Calu3 (cell line): ENCODE measurements at regions of chr2 and their contacts with region 1.

Region 1: GRCh38 chr2:31428001-31428418 is 13.5 kb upstream of the XDH start:
- DNase-seq: peak; percentile 72
- H3K4me3 Mint-ChIP-seq: no peak overlapping the region
- H3K27ac Mint-ChIP-seq: peak overlapping the region; percentile 71
- H3K4me1 Mint-ChIP-seq: peaks cover 47% of the 10 kb centered on the region
- H3K27me3 Mint-ChIP-seq: no peaks in the 10 kb centered on the region
- CTCF ChIP-seq: peak; percentile 32

Region 2: DNA sequence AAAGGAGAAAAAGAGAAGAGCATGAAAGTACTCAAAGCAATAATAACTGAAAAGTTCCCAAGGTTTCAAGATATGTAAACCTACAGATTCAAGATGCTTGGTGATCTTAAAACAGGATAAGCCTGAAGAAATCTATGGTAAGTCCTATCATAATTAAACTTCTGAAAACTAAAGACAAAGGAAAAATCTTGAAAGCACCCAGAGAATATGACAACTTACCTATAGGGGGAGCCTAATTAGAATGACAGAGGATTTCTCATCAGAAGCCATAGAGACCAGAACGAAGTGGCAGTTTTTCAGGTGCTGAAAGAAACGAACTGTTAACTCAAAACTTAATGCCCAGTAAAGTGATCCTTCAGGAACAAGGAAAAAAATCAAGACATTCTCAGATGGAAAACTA is 73.2 kb before region 1 on chr2:
- CTCF ChIA-PET with region 1: no interaction called
- intact Hi-C with region 1: loop called (anchors 2 kb)
- DNase-seq: no peak
- H3K4me3 Mint-ChIP-seq: peak overlapping the region; percentile 8
- H3K27ac Mint-ChIP-seq: peak overlapping the region; percentile 20
- H3K4me1 Mint-ChIP-seq: peaks cover 12% of the 10 kb centered on the region
- H3K27me3 Mint-ChIP-seq: no peaks in the 10 kb centered on the region
- CTCF ChIP-seq: peak; percentile 33

Region 3: DNA sequence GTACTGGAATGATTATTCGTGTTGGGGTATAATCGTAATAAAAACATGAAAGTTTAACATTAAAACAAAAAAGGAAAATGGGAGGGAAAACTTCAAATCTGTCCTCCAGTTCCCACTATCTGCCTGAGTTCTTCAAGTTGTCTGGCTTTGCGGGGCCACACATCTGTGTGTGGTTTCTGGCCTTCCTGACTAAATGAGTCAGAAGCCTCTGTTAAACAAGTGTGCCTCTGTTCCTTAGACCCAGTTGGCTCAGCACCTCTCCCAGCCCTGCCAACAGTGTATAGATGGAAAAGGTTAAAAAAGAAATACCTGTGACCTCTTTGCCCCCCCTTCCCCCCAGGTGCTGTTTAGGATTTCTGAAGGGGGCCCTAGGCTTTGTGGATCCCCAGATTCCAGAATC is 43.7 kb before region 1 on chr2:
- CTCF ChIA-PET with region 1: interaction called, 3 read pairs
- intact Hi-C with region 1: loop called (anchors 5 kb)
- DNase-seq: peak; percentile 75
- H3K4me3 Mint-ChIP-seq: peak overlapping the region; percentile 25
- H3K27ac Mint-ChIP-seq: peak overlapping the region; percentile 99
- H3K4me1 Mint-ChIP-seq: peaks cover 46% of the 10 kb centered on the region
- H3K27me3 Mint-ChIP-seq: no peaks in the 10 kb centered on the region
- CTCF ChIP-seq: no peak

Region 4: GRCh38 chr2:31401580-31401979 is 26.4 kb before region 1 on chr2:
- CTCF ChIA-PET with region 1: no interaction called
- intact Hi-C with region 1: no loop called
- DNase-seq: peak; percentile 61
- H3K4me3 Mint-ChIP-seq: no peak overlapping the region
- H3K27ac Mint-ChIP-seq: no peak overlapping the region
- H3K4me1 Mint-ChIP-seq: peaks cover 20% of the 10 kb centered on the region
- H3K27me3 Mint-ChIP-seq: no peaks in the 10 kb centered on the region
- CTCF ChIP-seq: no peak

Region 5: DNA sequence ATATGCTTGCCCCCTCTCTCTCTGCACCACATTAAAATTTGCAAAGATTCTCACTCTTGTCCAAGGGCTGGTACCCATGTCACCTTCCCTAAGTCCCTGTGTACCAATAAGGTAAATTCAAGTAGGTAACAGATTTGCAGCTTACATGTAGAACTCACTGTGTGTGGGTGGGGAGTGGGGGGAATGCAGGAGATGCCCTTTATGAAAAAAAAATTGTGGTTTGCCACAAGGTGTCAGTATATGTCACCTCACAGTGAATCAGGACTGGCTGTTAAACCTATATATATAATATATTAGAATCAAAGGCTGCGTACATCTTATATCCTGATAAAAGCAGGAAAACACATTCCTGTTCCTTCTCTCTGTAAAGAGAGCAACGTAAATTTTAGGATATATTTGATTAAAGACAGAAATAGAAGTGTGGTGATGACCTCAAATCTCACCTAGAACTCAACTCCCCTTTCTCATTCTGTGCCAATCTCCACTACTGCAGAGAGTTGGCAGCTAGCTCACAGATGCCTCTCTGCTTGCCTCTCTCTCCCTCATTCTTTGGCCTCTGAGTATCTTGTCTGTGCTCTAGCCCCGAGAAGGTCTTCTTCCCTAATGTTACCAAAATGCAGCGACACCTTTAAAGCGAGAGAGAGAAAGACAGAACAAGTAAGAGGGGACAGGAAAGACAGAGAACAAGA is 14.0 kb before region 1 on chr2:
- CTCF ChIA-PET with region 1: interaction called, 6 read pairs
- intact Hi-C with region 1: loop called (anchors 2 kb)
- DNase-seq: no peak
- H3K4me3 Mint-ChIP-seq: peak overlapping the region; percentile 67
- H3K27ac Mint-ChIP-seq: peak overlapping the region; percentile 86
- H3K4me1 Mint-ChIP-seq: peaks cover 41% of the 10 kb centered on the region
- H3K27me3 Mint-ChIP-seq: no peaks in the 10 kb centered on the region
- CTCF ChIP-seq: peak; percentile 51